Left ventricle myocardium superior (tissue), 1 donor: ENCODE measurements at regions of chr7 and their contacts with region 1.

Region 1: GRCh38 chr7:116499168-116500077 is at the start of gene CAV2:
- DNase-seq: peak; percentile 90
- ATAC-seq: peak; percentile 93
- total RNA-seq, gene CAV2: 204 TPM

Region 2: DNA sequence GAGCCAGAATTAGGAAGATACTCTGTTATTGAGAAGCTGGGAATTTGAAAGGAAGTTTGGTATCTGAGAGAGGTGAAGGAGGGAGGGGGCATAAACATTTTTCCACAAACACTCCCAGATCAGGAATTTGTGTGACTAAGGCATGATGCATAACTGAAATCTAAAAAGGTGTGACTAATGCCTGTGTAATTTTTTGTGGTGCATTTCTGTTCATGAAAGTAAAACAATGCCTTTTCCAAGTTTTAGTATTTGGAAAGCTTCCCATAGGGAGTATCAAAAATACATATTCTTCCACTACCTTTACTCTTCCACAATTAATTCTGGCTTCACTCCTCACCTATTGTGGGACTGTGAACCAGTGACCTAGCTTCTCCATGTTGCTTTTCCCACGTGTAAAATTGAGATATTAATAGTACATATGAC is 56.3 kb before region 1 on chr7:
- intact Hi-C with region 1: loop called (anchors 10 kb)
- DNase-seq: no peak
- ATAC-seq: no peak